GM13977 (cell line): ENCODE measurements at regions of chr10 and their contacts with region 1.

Region 1: GRCh38 chr10:70549962-70550458 is 52.5 kb downstream of the PRF1 start:
- DNase-seq: peak; percentile 85
- CTCF ChIP-seq: peak; percentile 83

Region 2: DNA sequence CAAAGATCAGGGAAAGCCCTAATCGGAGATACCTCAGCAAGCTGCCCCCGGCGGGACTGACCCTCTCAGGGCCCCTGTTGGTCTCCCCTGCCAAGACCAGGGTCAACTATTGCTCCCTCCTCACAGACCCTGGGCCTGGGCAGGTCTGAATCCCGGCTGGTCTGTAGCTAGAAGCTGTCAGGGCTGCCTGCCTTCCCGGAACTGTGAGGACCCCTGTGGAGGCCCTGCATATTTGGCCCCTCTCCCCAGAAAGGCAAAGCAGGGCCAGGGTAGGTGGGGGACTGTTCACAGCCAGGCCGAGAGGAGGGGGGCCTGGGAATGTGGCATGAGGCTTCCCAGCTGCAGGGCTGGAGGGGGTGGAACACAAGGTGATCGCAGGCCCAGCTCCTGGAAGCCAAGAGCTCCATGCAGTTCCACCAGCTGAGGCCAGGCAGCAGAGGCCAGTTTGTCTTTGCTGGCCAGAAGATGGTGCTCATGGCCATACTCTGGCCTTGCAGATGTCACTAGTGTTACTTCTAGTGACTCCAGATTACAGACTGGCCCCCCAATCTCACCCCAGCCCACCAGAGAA is 211.1 kb after region 1 on chr10:
- in situ Hi-C with region 1: loop called (anchors 5 kb)
- DNase-seq: no peak
- CTCF ChIP-seq: no peak